Gastrocnemius medialis (tissue), 4 donors: ENCODE measurements at regions of chr9 and their contacts with region 1.

Region 1: DNA sequence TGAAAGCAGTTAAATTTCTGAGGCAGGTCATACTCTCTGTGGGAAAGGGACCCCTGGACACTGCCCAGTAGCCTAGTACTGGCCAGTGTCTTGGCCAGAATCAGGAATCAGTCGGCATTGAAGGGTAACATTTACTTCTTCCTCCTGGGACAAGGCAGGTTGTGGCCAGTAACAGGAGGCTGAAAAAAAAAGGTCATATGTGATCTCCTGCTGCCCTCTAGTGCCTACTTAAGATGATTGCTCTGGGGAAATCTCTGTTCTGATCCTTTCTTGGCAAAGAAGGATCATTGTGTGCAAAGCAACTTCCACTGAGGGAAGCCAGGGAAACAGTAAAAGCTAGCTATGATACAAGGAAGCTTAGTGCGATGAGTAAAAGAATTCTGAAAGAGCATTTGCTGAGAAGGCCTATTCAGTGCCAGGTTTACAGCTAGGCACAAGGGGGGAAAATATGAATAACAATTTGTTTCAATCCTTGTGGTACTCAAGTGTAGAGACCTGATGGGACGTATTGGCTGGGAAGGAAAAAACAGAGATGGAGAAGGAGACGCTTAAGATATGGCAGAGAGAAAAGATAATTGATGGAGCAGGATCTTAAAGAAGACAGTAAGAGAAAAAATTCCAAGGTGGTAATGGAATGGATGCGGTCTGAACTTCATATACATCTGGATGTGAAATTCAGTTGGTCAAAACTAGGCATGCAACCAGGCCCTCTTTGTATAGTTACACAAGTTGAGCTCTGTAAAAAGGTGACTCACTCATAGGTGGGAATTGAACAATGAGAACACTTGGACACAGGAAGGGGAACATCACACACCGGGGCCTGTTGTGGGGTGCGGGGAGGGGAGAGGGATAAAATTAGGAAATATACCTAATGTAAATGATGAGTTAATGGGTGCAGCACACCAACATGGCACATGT is 25.8 kb upstream of the TRIM32 start:
- DNase-seq: peak in 1 of 2 donors; percentile 23
- ATAC-seq: peak; percentile 90 to 95
- H3K4me3 ChIP-seq: no peak overlapping the region
- H3K27ac ChIP-seq: no peak overlapping the region
- H3K4me1 ChIP-seq: peaks cover 5 to 32% of the 10 kb centered on the region in 2 donors
- H3K27me3 ChIP-seq: no peaks in the 10 kb centered on the region
- CTCF ChIP-seq: peak; percentile 69 to 76 (median 73)
- POLR2A ChIP-seq: no peak

Region 2: DNA sequence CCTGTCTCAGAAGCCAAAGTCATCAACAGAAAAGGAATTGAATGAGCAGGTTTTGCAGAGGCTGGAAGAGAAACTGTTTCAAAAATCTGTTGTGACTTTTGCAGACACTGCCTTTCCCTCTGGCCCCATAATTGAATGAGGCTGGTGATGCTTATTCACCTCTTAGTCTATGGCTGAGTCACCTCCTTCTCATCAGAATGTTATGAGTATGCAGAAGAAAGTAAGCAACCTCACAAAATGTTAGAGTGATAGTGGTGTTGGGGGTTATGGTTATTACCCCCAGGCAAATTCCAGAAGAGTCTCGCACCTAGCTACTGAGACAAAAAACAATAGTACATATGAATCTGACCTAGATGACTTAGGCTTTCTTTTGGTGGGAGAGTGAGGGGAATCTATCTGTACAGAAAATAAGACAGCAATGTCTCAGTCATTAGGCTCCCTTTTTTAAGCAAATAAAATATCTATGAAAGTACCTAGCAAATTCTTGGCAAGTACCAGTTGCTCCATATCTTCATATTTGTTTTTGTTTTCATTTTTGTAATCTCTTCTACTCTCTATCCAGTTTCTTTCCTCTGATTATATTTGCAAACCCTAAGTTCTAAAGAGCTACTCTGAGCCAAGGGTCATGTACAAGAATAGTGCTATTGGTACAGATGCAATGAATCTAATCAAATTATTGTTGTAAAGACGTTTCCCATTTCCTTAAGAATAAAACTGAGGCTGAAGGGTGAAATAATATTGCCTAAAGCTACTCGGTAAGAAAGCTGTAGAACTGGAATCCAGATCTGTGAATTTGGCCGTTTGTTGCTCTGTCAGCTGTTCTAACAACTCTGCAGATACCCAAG is 1045.3 kb before region 1 on chr9:
- in situ Hi-C with region 1: loop called in 1 of 4 experiments (anchors 25 kb)
- intact Hi-C with region 1: no loop called
- DNase-seq: no peak
- ATAC-seq: no peak
- H3K4me3 ChIP-seq: no peak overlapping the region
- H3K27ac ChIP-seq: no peak overlapping the region
- H3K4me1 ChIP-seq: no peaks in the 10 kb centered on the region
- H3K27me3 ChIP-seq: no peaks in the 10 kb centered on the region
- CTCF ChIP-seq: no peak
- POLR2A ChIP-seq: no peak

Region 3: DNA sequence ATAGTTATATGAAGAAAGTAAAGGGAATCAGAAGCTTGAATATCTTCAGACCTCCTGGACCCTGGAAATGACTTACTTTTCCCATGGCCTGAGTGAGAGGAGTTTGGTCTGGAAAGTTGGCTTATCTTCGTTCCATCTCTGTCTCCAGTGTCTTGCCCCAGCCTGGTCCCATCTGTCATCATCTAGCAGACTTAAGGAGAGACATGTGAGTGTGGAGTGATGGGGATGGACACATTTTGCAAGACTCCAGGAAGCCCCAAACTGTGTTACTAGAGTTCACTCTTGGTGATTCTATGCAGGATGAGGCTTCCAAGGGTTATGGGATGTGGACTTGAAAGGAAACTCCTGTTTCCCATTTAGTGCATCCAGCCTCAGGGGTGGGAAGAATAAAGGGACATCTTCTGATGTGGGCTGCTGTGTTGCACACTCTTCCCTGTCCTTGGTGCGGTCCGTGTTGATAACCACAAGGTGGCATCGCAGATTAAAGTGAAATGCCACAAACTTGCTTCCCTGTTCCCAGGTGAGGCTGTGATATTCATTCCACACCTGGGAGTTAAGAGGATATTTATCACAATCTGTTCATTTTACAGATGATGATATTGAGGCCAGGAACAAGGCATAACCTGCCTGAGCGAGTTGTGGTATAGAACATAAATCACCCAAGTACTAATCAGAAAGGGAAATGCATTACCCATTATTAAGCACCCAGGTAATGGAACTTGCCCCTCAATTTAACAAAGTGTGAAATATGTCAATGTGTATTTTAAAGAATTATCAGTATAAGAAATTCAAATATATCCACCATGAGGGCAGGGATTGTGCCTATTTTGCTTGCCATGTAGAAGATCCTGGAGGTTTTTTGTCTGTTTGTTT is 777.6 kb before region 1 on chr9:
- in situ Hi-C with region 1: loop called in 1 of 4 experiments (anchors 10 kb)
- intact Hi-C with region 1: loop called (anchors 5 kb)
- DNase-seq: no peak
- ATAC-seq: peak; percentile 62 to 66
- H3K4me3 ChIP-seq: no peak overlapping the region
- H3K27ac ChIP-seq: no peak overlapping the region
- H3K4me1 ChIP-seq: no peaks in the 10 kb centered on the region
- H3K27me3 ChIP-seq: no peaks in the 10 kb centered on the region
- CTCF ChIP-seq: peak; percentile 34 to 55 (median 41)
- POLR2A ChIP-seq: no peak

Region 4: DNA sequence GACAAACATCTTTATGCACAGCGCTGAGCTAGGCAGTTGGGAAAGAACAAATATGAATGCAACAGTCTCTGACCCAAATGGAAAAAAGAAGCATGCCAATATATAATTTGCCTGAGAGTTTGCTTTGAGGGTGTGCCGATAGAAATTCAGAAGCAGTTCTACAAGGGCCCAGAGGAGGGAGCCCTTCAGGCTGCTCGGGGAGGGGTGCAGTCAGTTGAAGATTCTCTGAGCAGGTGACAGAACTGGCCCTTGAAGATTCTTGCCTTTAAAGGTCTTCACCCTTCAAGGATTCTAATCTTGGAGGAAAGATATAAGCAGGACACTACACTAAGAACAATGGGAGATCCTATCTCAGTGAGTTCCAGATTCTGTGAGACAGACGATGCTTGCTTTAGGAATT is 511.5 kb before region 1 on chr9:
- in situ Hi-C with region 1: loop called (anchors 5 to 25 kb)
- intact Hi-C with region 1: loop called (anchors 5 kb)
- DNase-seq: peak in 1 of 2 donors; percentile 25
- ATAC-seq: peak in 1 of 2 donors; percentile 68
- H3K4me3 ChIP-seq: no peak overlapping the region
- H3K27ac ChIP-seq: no peak overlapping the region
- H3K4me1 ChIP-seq: peaks cover 0 to 6% of the 10 kb centered on the region in 2 donors
- H3K27me3 ChIP-seq: peaks cover 0 to 13% (median 0%) of the 10 kb centered on the region in 3 donors
- CTCF ChIP-seq: peak; percentile 24 to 64 (median 54)
- POLR2A ChIP-seq: no peak

Region 5: GRCh38 chr9:116156621-116157314 is 504.5 kb before region 1 on chr9:
- in situ Hi-C with region 1: loop called (anchors 5 to 25 kb)
- intact Hi-C with region 1: loop called (anchors 5 kb)
- DNase-seq: peak; percentile 57 to 86
- ATAC-seq: peak; percentile 94 to 96
- H3K4me3 ChIP-seq: peak overlapping the region; percentile 27 to 53 (median 35)
- H3K27ac ChIP-seq: peak overlapping the region; percentile 75 to 82 (median 78)
- H3K4me1 ChIP-seq: peaks cover 18 to 37% of the 10 kb centered on the region in 2 donors
- H3K27me3 ChIP-seq: peaks cover 0 to 17% (median 0%) of the 10 kb centered on the region in 3 donors
- CTCF ChIP-seq: peak in 2 of 5 experiments; percentile 7 to 16
- POLR2A ChIP-seq: peak; percentile 36 to 62

Region 6: DNA sequence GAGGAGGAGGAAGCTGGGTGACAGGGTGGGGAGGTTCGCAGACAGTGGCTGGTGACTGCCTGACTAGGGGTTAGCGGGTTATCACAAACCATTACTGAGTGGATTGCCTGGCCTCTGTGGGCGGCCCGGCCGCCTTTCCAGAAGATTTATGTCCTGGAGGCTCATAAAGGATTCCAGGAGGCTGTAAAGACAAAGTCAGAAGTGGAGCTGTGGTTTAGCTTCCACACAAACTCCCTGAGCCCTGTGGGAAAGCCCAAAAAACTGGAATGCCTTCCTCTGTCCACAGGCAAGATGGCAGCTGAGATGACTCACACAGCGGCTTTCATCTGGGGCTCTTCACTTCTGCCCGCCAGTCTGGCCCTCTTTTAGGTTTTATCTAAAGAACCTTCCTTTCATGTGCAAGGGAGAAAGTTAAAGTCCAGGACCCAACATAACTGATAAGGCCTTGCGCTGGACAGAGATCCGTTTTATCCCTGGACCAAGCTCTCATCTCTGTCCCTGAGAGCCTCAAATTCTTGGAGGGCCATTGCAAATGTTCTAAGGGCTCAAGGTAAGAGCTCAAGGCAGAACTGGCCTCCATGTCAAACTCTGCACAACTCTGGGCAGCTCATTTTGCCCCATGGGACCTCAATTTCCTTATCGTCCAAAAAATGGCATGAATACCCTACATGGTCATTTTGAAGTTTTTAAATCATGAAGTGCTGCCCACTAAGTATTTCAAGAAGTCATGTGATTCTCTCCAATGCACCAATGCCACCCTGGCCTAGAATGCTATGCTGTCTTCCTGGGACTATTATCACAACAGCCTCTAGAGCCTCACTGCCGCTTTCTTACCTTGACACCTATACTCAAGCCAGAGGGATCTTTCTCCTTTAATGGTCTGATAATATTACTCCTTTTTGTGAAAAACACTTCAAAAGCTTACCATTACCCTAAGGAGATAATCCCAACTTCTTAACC is 223.6 kb before region 1 on chr9:
- in situ Hi-C with region 1: no loop called
- intact Hi-C with region 1: no loop called
- DNase-seq: no peak
- ATAC-seq: no peak
- H3K4me3 ChIP-seq: no peak overlapping the region
- H3K27ac ChIP-seq: no peak overlapping the region
- H3K4me1 ChIP-seq: no peaks in the 10 kb centered on the region
- H3K27me3 ChIP-seq: no peaks in the 10 kb centered on the region
- CTCF ChIP-seq: no peak
- POLR2A ChIP-seq: no peak

Region 7: DNA sequence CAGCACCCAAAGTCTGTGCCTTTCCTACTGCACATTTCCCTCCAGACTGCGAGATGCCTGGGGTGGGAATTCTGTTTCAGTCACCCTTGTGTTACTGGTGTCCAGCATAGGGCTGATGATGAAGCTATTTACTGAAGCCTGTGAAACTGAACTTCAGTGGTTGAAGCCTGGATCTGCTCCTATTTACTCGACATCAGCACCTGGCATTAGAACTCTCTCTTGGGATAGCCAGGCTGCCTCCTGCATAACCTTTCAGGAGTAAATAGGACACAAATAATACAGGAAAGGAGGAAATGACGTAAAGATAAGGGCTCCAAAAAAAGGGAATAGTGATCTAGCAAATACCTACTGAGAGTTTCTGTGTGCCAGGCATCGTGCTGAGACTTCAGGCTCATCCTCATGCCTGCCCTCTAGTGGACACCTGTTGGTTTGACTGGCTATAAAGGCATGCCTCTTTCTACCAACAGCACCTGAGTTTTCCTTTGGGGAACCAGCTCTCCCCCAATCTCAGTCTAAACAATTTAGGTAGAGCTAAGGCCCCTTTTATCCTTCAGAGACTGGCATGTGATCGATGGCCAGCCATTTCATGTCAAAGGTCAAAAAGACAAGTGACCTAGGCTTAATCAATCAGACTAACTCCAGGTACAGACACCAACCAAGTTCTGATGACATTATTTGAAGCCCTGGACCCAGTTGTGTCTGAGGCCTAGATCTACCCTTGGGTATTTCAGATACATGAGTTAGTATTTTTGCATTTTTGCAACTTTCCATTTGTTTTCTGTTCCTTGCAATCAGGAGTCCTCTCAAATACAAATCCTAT is 166.3 kb before region 1 on chr9:
- in situ Hi-C with region 1: no loop called
- intact Hi-C with region 1: loop called (anchors 10 kb)
- DNase-seq: no peak
- ATAC-seq: peak; percentile 39 to 78
- H3K4me3 ChIP-seq: no peak overlapping the region
- H3K27ac ChIP-seq: no peak overlapping the region
- H3K4me1 ChIP-seq: no peaks in the 10 kb centered on the region
- H3K27me3 ChIP-seq: no peaks in the 10 kb centered on the region
- CTCF ChIP-seq: peak; percentile 46 to 71 (median 58)
- POLR2A ChIP-seq: no peak

Region 8: GRCh38 chr9:116589392-116590354 is 71.6 kb before region 1 on chr9:
- in situ Hi-C with region 1: no loop called
- intact Hi-C with region 1: loop called (anchors 5 kb)
- DNase-seq: no peak
- ATAC-seq: peak in 1 of 2 donors; percentile 75
- H3K4me3 ChIP-seq: no peak overlapping the region
- H3K27ac ChIP-seq: no peak overlapping the region
- H3K4me1 ChIP-seq: peaks cover 0 to 11% of the 10 kb centered on the region in 2 donors
- H3K27me3 ChIP-seq: no peaks in the 10 kb centered on the region
- CTCF ChIP-seq: peak in 3 of 5 experiments; percentile 31 to 45 (median 37)
- POLR2A ChIP-seq: no peak

Region 9: GRCh38 chr9:116605904-116606341 is 55.4 kb before region 1 on chr9:
- in situ Hi-C with region 1: no loop called
- intact Hi-C with region 1: no loop called
- DNase-seq: no peak
- ATAC-seq: no peak
- H3K4me3 ChIP-seq: no peak overlapping the region
- H3K27ac ChIP-seq: peak overlapping the region in 1 of 4 donors; percentile 14
- H3K4me1 ChIP-seq: no peaks in the 10 kb centered on the region
- H3K27me3 ChIP-seq: no peaks in the 10 kb centered on the region
- CTCF ChIP-seq: no peak
- POLR2A ChIP-seq: no peak

Region 10: DNA sequence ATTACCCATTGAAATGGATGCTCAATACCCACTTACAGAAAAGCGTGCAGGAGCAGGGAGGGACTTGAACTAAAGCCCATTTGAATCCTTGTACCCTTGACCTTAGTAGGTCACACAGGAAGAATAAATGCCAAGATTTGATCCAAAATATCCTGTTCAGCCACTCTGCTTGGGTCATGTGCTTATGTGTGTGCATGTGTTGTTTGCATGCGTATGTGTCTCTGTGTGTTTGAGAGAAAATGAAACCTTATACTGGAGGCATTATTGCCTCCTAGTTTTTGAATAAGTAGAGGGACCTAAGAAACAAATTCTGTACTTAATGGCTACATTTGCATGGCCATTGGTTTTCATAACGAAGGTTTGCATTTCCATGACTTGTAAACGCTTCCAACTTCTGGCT is 37.6 kb before region 1 on chr9:
- in situ Hi-C with region 1: no loop called
- intact Hi-C with region 1: no loop called
- DNase-seq: no peak
- ATAC-seq: no peak
- H3K4me3 ChIP-seq: no peak overlapping the region
- H3K27ac ChIP-seq: peak overlapping the region in 3 of 4 donors; percentile 12 to 30 (median 22)
- H3K4me1 ChIP-seq: peaks cover 0 to 3% of the 10 kb centered on the region in 2 donors
- H3K27me3 ChIP-seq: no peaks in the 10 kb centered on the region
- CTCF ChIP-seq: no peak
- POLR2A ChIP-seq: no peak

Region 11: GRCh38 chr9:116733010-116733641 is 71.8 kb after region 1 on chr9:
- in situ Hi-C with region 1: no loop called
- intact Hi-C with region 1: no loop called
- DNase-seq: no peak
- ATAC-seq: no peak
- H3K4me3 ChIP-seq: no peak overlapping the region
- H3K27ac ChIP-seq: no peak overlapping the region
- H3K4me1 ChIP-seq: no peaks in the 10 kb centered on the region
- H3K27me3 ChIP-seq: no peaks in the 10 kb centered on the region
- CTCF ChIP-seq: no peak
- POLR2A ChIP-seq: no peak